IMR-90 (cell line): ENCODE measurements at regions of chr5 and their contacts with region 1.

Region 1: DNA sequence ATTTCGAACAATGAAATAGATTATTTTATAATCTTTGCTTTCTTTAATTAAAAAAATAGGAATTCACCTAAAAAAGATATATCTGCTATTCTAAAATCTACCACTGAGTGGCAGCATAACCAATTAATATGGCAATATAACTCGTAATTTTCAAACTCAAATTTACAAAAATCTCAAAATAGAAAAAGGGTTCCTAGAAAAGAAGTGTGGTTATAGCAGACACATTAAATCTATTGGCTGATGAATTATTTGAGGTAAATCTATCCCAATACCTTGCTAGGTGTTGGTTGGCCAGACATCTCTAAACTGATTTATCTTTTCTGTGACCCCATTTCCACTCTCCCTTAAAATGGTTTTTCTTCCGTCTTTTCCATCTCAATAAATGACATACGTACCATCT is 30.2 kb upstream of the NRG2 start:
- DNase-seq: peak; percentile 17
- ATAC-seq: no peak
- H3K4me3 ChIP-seq: no peak overlapping the region
- H3K27ac ChIP-seq: no peak overlapping the region
- H3K4me1 ChIP-seq: no peaks in the 10 kb centered on the region
- H3K27me3 ChIP-seq: peaks cover 18% of the 10 kb centered on the region
- CTCF ChIP-seq: peak; percentile 63
- POLR2A ChIP-seq: no peak
- RAD21 ChIP-seq: peak; percentile 65

Region 2: GRCh38 chr5:140157032-140157803 is 83.9 kb after region 1 on chr5:
- CTCF ChIA-PET with region 1: interaction called, 4 read pairs
- POLR2A ChIA-PET with region 1: no interaction called
- dilution Hi-C with region 1: no loop called
- in situ Hi-C with region 1: no loop called
- intact Hi-C with region 1: loop called (anchors 1 kb)
- DNase-seq: peak; percentile 73
- ATAC-seq: peak; percentile 98
- H3K4me3 ChIP-seq: peak overlapping the region; percentile 5; the same call in 1 of the 2 replicates
- H3K27ac ChIP-seq: no peak overlapping the region
- H3K4me1 ChIP-seq: no peaks in the 10 kb centered on the region
- H3K27me3 ChIP-seq: no peaks in the 10 kb centered on the region; the same call in 1 of the 2 replicates
- CTCF ChIP-seq: peak; percentile 97
- POLR2A ChIP-seq: no peak
- RAD21 ChIP-seq: peak; percentile 96

Region 3: GRCh38 chr5:140169410-140169809 is 96.1 kb after region 1 on chr5:
- CTCF ChIA-PET with region 1: interaction called, 4 read pairs
- POLR2A ChIA-PET with region 1: no interaction called
- dilution Hi-C with region 1: no loop called
- in situ Hi-C with region 1: loop called (anchors 5 kb)
- intact Hi-C with region 1: no loop called
- DNase-seq: no peak
- ATAC-seq: no peak
- H3K4me3 ChIP-seq: no peak overlapping the region
- H3K27ac ChIP-seq: no peak overlapping the region
- H3K4me1 ChIP-seq: no peaks in the 10 kb centered on the region
- H3K27me3 ChIP-seq: no peaks in the 10 kb centered on the region
- CTCF ChIP-seq: no peak
- POLR2A ChIP-seq: no peak
- RAD21 ChIP-seq: no peak

Region 4: DNA sequence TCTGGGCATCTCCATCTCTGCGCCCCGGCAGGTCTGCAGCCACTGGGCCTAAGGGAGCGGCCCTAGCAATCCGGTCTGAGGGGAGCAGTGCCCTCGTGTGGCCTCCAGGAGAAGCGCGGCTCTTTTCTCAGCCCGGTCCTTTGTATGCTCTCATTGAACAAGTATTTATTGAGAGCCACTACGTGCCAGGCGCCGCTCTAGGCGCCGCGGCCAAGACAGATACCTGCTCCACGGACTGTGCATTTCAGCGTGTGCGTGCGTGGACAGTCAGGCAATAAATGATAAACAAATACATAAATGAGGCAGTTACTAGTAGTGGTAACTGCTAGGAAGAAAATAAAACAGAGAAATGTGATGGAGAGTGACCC is 284.4 kb after region 1 on chr5:
- CTCF ChIA-PET with region 1: no interaction called
- POLR2A ChIA-PET with region 1: no interaction called
- dilution Hi-C with region 1: no loop called
- in situ Hi-C with region 1: no loop called
- intact Hi-C with region 1: loop called (anchors 10 kb)
- DNase-seq: peak; percentile 83
- ATAC-seq: peak; percentile 99
- H3K4me3 ChIP-seq: peak overlapping the region; percentile 5; the same call in 1 of the 2 replicates
- H3K27ac ChIP-seq: no peak overlapping the region
- H3K4me1 ChIP-seq: no peaks in the 10 kb centered on the region
- H3K27me3 ChIP-seq: no peaks in the 10 kb centered on the region; the same call in 1 of the 2 replicates
- CTCF ChIP-seq: peak; percentile 96
- POLR2A ChIP-seq: no peak
- RAD21 ChIP-seq: peak; percentile 87